BJ (cell line): ENCODE measurements at regions of chr1 and their contacts with region 1.

Region 1: DNA sequence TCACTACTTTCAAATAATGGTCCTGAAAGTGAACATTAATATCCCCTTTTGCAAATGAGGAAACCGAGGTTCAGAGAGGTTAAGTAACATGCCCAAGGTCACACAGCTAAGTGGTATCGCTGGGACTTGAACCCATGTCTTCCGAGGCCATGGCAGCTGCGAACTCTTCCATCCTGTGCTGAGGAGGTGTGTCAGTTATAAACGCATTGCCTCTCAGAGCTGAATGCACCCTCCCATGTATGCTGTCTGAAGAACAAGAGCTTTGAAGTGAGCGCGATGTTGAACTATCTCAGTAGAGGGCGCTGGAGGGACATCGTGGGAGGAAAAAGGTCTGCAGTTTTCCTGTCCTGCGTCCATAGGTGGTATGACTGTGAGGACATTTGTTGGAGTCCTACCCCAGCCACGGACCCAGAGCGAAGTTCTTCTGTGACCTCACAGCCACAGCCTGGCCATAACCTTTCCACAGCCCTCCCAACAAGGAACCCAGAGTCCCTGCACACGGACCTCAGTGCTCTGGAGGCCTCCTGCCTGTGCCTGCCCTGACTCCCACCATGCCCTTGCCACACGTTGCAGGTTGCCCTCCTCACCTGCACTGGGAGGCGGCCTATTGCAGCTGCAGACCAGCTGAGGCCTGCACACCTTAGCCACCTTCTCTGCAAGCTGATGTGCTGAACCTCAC is 7.5 kb downstream of the MYOC start:
- DNase-seq: peak; percentile 55
- H3K4me3 ChIP-seq: no peak overlapping the region
- H3K27me3 ChIP-seq: no peaks in the 10 kb centered on the region; the same call in 1 of the 2 replicates
- CTCF ChIP-seq: peak; percentile 86

Region 2: DNA sequence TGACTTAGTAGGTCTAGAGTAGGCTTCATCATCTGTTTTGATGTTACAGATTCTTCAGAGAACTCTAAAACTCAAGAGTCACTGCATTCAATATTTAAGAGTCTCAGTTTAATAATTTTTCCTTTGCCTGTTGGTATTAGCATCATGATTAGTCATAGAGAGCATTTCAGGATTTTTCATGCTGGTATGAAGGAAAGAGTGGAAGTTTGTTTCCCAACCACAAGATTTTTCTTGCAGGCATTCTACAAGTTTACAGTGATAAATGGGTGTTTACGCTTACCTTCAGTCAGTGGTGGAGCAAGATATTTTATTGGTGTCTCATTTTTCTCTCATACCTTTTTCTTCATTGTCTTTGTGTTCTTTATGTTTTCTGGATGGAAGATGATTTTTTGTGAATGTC is 81.3 kb before region 1 on chr1:
- CTCF ChIA-PET with region 1: no interaction called
- POLR2A ChIA-PET with region 1: no interaction called
- DNase-seq: peak; percentile 35
- H3K4me3 ChIP-seq: no peak overlapping the region
- H3K27me3 ChIP-seq: no peaks in the 10 kb centered on the region
- CTCF ChIP-seq: no peak

Region 3: GRCh38 chr1:171576144-171576543 is 68.8 kb before region 1 on chr1:
- CTCF ChIA-PET with region 1: no interaction called
- POLR2A ChIA-PET with region 1: no interaction called
- DNase-seq: no peak
- H3K4me3 ChIP-seq: no peak overlapping the region
- H3K27me3 ChIP-seq: no peaks in the 10 kb centered on the region
- CTCF ChIP-seq: no peak

Region 4: GRCh38 chr1:171654942-171655745 is 10.2 kb after region 1 on chr1:
- CTCF ChIA-PET with region 1: interaction called, 49 read pairs
- POLR2A ChIA-PET with region 1: interaction called, 3 read pairs
- DNase-seq: no peak
- H3K4me3 ChIP-seq: no peak overlapping the region
- H3K27me3 ChIP-seq: no peaks in the 10 kb centered on the region
- CTCF ChIP-seq: peak; percentile 74

Region 5: GRCh38 chr1:171715813-171716251 is 70.9 kb after region 1 on chr1:
- CTCF ChIA-PET with region 1: interaction called, 86 read pairs
- POLR2A ChIA-PET with region 1: no interaction called
- DNase-seq: peak; percentile 10
- H3K4me3 ChIP-seq: no peak overlapping the region
- H3K27me3 ChIP-seq: no peaks in the 10 kb centered on the region
- CTCF ChIP-seq: peak; percentile 51

Region 6: GRCh38 chr1:171741872-171742576 is 97.1 kb after region 1 on chr1 and contains the start of gene VAMP4:
- CTCF ChIA-PET with region 1: interaction called, 15 read pairs
- POLR2A ChIA-PET with region 1: interaction called, 3 read pairs
- DNase-seq: no peak
- H3K4me3 ChIP-seq: peak within 1 kb of the TSS; percentile 66
- H3K27me3 ChIP-seq: no peaks in the 10 kb centered on the region
- CTCF ChIP-seq: no peak
- polyA plus RNA-seq, gene VAMP4: 4.5 and 9.9 TPM in 2 replicates

Region 7: DNA sequence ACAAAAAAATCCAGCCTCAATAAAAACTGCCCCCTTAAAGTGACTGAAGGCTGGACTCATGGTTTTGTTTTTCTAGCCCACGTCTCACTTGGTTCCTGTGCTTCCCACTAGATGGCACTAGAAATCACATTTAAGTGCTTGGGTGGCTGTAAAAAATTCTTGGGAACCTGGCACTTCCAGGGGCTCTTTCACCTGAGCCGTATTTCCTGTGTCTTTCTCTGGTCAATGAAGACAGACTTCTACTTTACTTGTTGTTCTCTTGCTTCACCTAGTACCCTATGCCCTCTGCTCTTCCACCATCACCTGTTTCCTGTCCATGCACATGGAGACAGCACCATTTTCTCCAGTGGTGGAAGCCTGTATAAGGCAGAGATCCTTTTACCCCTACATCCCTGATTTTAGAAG is 156.5 kb after region 1 on chr1:
- CTCF ChIA-PET with region 1: interaction called, 27 read pairs
- POLR2A ChIA-PET with region 1: no interaction called
- DNase-seq: no peak
- H3K4me3 ChIP-seq: no peak overlapping the region
- H3K27me3 ChIP-seq: no peaks in the 10 kb centered on the region
- CTCF ChIP-seq: peak; percentile 81